Activated CD4-positive, alpha-beta memory T cell treated with anti-CD3 and anti-CD28 coated beads for 36 hours (primary cell): ENCODE measurements at regions of chr5 and their contacts with region 1.

Region 1: DNA sequence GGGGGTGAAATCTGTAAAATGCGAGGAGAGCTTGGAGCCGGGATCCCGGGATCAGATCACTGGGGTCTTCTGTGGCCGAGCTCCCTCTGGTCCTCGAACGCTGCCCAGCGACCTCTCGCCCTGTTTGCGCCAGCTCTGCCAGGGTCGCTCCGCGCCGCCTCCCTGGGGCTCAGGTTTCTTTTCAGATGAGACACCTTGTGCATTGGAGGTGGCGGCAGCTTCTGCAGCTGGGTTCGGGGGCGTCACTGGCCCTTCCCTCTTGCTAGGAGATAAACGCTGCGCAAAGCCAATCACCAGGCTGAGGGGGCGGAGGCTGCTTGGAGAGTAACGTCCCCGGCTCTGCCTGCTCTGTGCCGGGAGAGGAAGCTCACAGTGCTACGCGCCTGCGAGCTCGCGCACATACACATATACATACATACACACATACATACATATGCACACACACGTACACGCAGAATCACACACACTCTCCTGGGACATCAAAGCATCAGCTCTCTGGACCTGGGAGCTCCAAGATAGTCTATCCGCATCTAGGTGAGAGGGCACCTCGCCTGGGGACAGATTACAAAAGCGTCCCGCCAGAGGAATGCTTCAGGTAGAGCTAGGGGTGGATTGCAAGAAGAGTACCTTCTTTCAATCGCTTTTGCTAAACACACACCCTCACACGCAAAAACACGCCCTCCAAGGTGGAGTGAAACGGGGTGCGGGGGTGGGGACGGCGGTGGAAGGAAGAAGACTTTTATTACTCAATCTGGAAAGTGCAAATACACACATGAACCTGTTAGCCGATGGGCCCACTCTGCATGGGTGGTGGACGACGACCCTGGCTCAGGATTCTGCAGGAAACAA is at the start of gene ST8SIA4:
- DNase-seq: peak; percentile 95
- H3K4me3 Mint-ChIP-seq: peak within 1 kb of the TSS; percentile 92
- H3K27ac Mint-ChIP-seq: peak within 1 kb of the TSS; percentile 96
- H3K4me1 Mint-ChIP-seq: peaks cover 30% of the 10 kb centered on the region
- H3K27me3 Mint-ChIP-seq: no peaks in the 10 kb centered on the region
- total RNA-seq, gene ST8SIA4: 32.8 to 35.1 TPM

Region 2: GRCh38 chr5:100535060-100536005 is 367.9 kb before region 1 on chr5 and contains the start of gene FAM174A:
- CTCF ChIA-PET with region 1: no interaction called
- POLR2A ChIA-PET with region 1: interaction called, 3 read pairs
- intact Hi-C with region 1: loop called (anchors 1 kb)
- DNase-seq: peak; percentile 96
- H3K4me3 Mint-ChIP-seq: peak within 1 kb of the TSS; percentile 98
- H3K27ac Mint-ChIP-seq: peak within 1 kb of the TSS; percentile 87
- H3K4me1 Mint-ChIP-seq: peaks cover 22% of the 10 kb centered on the region
- H3K27me3 Mint-ChIP-seq: no peaks in the 10 kb centered on the region
- total RNA-seq, gene FAM174A: 5.8 to 8.3 TPM

Region 3: DNA sequence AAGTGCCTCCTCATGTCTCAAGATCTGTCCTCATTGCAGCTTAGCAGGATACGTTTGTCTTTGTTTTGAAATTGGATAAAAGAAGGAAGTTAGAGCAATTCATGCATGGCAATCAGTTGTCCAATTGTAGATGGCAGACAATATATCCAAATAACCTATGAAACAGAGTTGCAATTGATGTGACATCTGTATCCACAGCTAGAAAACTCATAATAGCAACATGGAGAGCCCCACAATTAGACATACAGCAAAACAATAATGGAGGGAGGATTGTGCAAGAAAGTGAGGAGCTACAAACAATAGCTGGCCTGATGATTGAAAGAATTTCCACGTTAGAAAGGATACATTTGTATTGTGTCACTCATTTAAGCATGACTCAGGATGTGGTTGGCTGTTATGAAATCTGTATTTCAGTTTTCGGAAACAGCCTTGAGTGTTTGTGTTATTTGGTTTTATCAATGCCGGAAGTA is 236.1 kb before region 1 on chr5:
- CTCF ChIA-PET with region 1: no interaction called
- POLR2A ChIA-PET with region 1: no interaction called
- intact Hi-C with region 1: loop called (anchors 2 kb)
- DNase-seq: no peak
- H3K4me3 Mint-ChIP-seq: no peak overlapping the region
- H3K27ac Mint-ChIP-seq: no peak overlapping the region
- H3K4me1 Mint-ChIP-seq: peaks cover 10% of the 10 kb centered on the region
- H3K27me3 Mint-ChIP-seq: no peaks in the 10 kb centered on the region

Region 4: DNA sequence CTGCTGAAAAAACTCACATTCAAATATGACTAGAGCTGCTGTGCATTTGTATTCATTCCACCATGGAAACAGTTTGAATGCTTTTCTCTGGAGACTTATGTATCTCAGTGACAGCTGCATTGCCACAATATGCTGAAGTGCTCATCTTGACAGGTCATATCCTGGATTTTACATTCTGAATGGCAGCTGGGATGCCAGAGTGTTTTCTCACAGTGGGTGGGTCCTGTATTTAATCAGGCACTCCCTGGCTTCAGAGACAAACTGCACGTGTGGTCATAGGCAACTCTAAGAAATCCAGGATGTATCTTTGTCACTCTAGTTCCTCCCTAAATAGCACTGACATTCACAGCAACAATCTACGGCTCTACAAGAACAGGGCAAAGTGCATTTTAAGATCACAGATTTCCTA is 75.8 kb before region 1 on chr5:
- CTCF ChIA-PET with region 1: interaction called, 5 read pairs
- POLR2A ChIA-PET with region 1: interaction called, 20 read pairs
- intact Hi-C with region 1: loop called (anchors 1 kb)
- DNase-seq: peak; percentile 23
- H3K4me3 Mint-ChIP-seq: no peak overlapping the region
- H3K27ac Mint-ChIP-seq: peak overlapping the region; percentile 79
- H3K4me1 Mint-ChIP-seq: peaks cover 43% of the 10 kb centered on the region
- H3K27me3 Mint-ChIP-seq: no peaks in the 10 kb centered on the region

Region 5: GRCh38 chr5:100860407-100860806 is 42.9 kb before region 1 on chr5:
- CTCF ChIA-PET with region 1: interaction called, 3 read pairs
- POLR2A ChIA-PET with region 1: interaction called, 96 read pairs
- intact Hi-C with region 1: loop called (anchors 1 kb)
- DNase-seq: peak; percentile 26
- H3K4me3 Mint-ChIP-seq: no peak overlapping the region
- H3K27ac Mint-ChIP-seq: peak overlapping the region; percentile 80
- H3K4me1 Mint-ChIP-seq: peaks cover 65% of the 10 kb centered on the region
- H3K27me3 Mint-ChIP-seq: no peaks in the 10 kb centered on the region

Region 6: DNA sequence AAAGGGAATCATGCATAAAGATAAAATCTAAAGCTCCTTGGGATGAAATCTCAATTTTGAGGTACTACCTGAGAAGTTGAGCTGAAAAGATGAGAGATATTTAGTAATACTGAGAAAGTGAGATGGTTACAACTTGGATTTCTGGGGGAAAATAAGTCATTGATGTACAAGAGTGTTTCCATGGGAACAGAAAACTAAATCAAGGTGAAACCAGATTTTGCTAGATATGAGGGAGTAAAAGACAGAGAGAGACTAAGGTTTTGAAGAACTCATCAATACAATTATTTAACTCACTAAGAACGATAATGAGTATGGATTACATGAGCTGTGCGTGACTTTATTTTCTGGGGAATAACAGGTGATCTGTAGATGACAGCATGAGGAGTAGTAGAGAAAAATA is 10.0 kb after region 1 on chr5:
- CTCF ChIA-PET with region 1: interaction called, 3 read pairs
- POLR2A ChIA-PET with region 1: interaction called, 10 read pairs
- intact Hi-C with region 1: loop called (anchors 1 kb)
- DNase-seq: no peak
- H3K4me3 Mint-ChIP-seq: no peak overlapping the region
- H3K27ac Mint-ChIP-seq: peak overlapping the region; percentile 1
- H3K4me1 Mint-ChIP-seq: peaks cover 19% of the 10 kb centered on the region
- H3K27me3 Mint-ChIP-seq: no peaks in the 10 kb centered on the region

Region 7: DNA sequence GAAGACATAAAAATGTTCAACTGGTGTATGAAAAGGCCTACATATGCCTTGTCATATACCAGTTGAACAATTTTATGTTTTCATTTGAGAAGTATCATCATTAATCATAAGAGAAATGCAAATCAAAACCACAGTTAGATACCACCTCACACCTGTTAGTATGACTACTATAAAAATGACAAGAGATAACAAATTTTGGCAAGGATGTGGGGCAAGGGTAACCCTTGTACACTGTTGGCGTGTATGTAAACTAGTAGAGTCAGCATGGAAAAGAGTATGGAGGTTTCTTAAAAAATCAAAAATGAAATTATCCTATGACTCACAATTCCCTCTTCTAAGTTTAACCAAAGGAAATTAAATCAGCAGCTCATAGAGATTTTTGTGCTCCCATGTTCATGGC is 250.3 kb after region 1 on chr5:
- CTCF ChIA-PET with region 1: no interaction called
- POLR2A ChIA-PET with region 1: no interaction called
- intact Hi-C with region 1: no loop called
- DNase-seq: no peak
- H3K4me3 Mint-ChIP-seq: no peak overlapping the region
- H3K27ac Mint-ChIP-seq: no peak overlapping the region
- H3K4me1 Mint-ChIP-seq: peaks cover 5% of the 10 kb centered on the region
- H3K27me3 Mint-ChIP-seq: no peaks in the 10 kb centered on the region